PC-9 (cell line): ENCODE measurements at regions of chr5 and their contacts with region 1.

Region 1: GRCh38 chr5:40688127-40688761 is 8.5 kb downstream of the PTGER4 start:
- DNase-seq: peak; percentile 80 to 93
- H3K4me3 ChIP-seq: no peak overlapping the region
- H3K27ac ChIP-seq: 0 out of 2 replicates have a peak overlapping the region, but pooled peaks have one; percentile 2
- H3K4me1 ChIP-seq: peaks cover 52% of the 10 kb centered on the region
- H3K27me3 ChIP-seq: no peaks in the 10 kb centered on the region
- CTCF ChIP-seq: peak; percentile 98

Region 2: DNA sequence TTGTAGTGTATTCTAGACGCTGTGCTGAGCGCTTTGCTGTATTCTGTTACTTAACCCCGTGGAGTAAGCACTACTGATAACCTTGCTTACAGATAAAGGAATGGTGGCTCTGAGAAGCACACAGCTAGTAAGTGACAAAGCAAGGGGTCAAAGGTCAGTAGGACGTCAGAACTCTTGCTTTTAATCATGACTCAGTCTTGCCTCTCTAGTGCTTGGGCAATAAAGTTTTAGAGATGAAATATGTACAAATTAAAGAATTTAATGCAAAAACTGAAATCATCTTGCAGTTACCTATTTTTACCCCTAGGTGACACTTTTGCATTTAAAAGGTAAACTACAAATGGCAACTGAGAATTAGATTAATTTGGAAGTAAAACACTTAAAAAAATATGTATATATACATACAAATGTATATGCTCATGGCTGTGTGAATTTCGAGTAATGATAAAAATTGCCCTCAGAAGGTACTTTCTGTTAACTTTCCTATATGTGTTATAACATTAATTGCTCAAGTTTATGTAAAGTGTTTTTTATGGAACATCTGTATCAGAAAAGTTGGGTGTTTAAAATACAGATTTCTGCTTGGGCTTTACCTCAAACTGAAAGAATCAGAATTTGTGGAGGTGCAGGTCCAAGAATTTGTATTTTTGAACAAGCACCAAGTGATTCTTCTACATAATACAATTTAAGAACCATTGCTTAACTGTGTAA is 1088.4 kb before region 1 on chr5:
- CTCF ChIA-PET with region 1: no interaction called
- POLR2A ChIA-PET with region 1: interaction called, 3 read pairs
- intact Hi-C with region 1: loop called (anchors 1 kb)
- DNase-seq: peak in 1 of 2 experiments; percentile 63
- H3K4me3 ChIP-seq: no peak overlapping the region
- H3K27ac ChIP-seq: no peak overlapping the region
- H3K4me1 ChIP-seq: peaks cover 12% of the 10 kb centered on the region
- H3K27me3 ChIP-seq: no peaks in the 10 kb centered on the region
- CTCF ChIP-seq: peak; percentile 85

Region 3: DNA sequence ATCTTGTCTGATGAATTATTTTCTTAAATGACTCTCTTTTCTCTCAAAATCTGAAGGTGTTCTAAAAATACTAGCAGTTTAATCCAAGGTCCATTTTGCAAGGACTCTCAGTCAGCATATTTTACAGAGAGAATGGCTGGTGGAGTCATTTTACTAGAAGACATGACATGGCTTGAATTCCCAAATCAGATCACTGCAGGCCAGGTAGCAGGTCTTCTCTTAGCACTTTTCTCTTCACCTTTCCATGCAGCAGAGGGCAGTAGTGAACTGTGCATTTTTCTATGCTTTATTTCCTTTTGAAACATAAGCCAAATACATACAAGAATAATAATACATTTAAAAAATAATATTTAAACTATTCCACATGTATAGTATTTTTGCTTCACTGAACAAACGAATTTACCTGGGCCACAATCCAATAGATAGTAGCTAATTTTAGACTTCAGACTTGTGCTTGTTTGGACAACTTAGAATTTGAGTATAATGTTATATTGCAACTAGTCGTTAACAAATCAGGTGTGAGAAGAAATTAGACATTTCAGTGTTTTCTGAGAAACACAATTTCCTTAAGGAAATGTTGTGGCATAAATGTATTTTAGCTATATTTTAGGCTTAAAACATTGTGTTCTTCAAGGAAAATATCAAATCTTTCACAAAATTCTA is 974.1 kb before region 1 on chr5:
- CTCF ChIA-PET with region 1: interaction called, 21 read pairs
- POLR2A ChIA-PET with region 1: no interaction called
- intact Hi-C with region 1: loop called (anchors 1 kb)
- DNase-seq: peak; percentile 63 to 74
- H3K4me3 ChIP-seq: no peak overlapping the region
- H3K27ac ChIP-seq: peak overlapping the region; percentile 60
- H3K4me1 ChIP-seq: peaks cover 8% of the 10 kb centered on the region; the same call in 1 of the 2 replicates
- H3K27me3 ChIP-seq: no peaks in the 10 kb centered on the region
- CTCF ChIP-seq: peak; percentile 87

Region 4: GRCh38 chr5:40112875-40113274 is 575.4 kb before region 1 on chr5:
- CTCF ChIA-PET with region 1: no interaction called
- POLR2A ChIA-PET with region 1: interaction called, 4 read pairs
- intact Hi-C with region 1: loop called (anchors 2 kb)
- DNase-seq: no peak
- H3K4me3 ChIP-seq: no peak overlapping the region
- H3K27ac ChIP-seq: no peak overlapping the region
- H3K4me1 ChIP-seq: peaks cover 12% of the 10 kb centered on the region
- H3K27me3 ChIP-seq: no peaks in the 10 kb centered on the region
- CTCF ChIP-seq: no peak

Region 5: DNA sequence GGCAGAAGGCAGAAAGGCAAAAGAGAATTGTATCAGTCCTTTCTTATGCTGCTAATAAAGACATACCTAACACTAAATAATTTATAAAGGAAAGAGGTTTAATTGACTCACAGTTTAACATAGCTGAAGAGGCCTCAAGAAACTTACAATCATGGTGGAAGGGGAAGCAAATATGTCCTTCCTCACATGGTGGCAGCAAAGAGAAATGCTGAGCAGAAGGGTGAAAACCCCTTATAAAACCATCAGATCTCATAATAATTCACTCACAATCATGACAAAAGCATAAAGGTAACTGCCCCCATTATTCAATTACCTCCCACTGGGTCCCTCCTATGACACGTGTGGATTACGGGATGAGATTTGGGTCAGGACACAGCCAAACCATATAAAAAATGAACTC is 321.0 kb before region 1 on chr5:
- CTCF ChIA-PET with region 1: no interaction called
- POLR2A ChIA-PET with region 1: no interaction called
- intact Hi-C with region 1: loop called (anchors 5 kb)
- DNase-seq: no peak
- H3K4me3 ChIP-seq: no peak overlapping the region
- H3K27ac ChIP-seq: no peak overlapping the region
- H3K4me1 ChIP-seq: no peaks in the 10 kb centered on the region
- H3K27me3 ChIP-seq: no peaks in the 10 kb centered on the region
- CTCF ChIP-seq: no peak

Region 6: DNA sequence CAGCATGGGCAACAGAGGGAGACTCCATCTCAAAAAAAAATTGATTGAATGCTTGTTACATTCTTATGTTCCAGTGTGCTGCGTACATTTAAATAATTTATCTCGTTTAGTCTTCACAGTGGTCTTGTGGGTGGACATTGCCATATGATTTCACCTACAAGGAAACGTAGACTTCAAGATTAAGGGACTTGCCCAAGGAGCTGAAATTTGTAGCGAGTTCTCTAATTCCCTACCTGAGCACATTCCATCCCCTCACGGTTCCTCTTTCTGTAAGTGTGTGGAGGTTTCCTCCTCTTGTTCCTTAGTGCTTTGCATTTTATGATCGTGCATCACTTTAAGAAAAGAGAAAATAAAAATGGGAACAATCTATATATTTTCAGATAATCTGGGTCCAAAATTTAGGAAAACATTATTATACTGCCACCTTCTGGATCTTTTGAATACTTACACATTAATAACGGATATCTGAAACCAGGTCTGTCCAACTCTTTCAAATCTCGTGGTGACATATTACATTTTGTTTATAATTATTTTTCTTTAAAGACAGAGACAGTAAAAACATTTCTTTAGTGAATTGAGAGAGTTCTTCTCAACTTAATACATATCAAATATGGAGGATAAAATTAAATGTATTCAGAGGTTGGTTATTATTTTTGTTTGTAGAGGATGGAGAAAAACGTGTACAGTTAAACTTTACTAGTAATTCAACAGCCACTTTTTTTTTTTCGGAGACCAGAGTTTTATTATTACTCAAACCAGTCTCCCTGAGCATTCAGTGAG is 191.1 kb after region 1 on chr5:
- CTCF ChIA-PET with region 1: interaction called, 5 read pairs
- POLR2A ChIA-PET with region 1: no interaction called
- intact Hi-C with region 1: loop called (anchors 1 kb)
- DNase-seq: peak; percentile 6 to 47
- H3K4me3 ChIP-seq: no peak overlapping the region
- H3K27ac ChIP-seq: no peak overlapping the region
- H3K4me1 ChIP-seq: no peaks in the 10 kb centered on the region
- H3K27me3 ChIP-seq: no peaks in the 10 kb centered on the region
- CTCF ChIP-seq: peak; percentile 90

Region 7: DNA sequence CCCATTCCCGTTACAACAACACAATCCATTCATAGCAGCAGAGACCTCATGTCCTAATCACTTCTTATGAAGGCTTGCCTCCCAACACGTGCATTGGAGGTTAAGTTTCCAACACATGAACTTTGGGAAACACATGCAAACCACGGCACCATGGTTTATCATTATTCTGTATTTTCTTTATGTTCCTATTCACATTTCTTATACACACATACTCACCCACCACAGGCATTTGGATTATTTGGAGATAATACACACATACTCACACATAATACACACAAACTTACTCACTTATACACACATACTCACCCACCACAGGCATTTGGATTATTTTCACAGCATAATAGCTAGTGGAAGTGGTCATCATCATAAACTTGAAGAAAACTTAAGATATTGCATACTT is 296.6 kb after region 1 on chr5:
- CTCF ChIA-PET with region 1: no interaction called
- POLR2A ChIA-PET with region 1: no interaction called
- intact Hi-C with region 1: no loop called
- DNase-seq: peak in 1 of 2 experiments; percentile 34
- H3K4me3 ChIP-seq: no peak overlapping the region
- H3K27ac ChIP-seq: no peak overlapping the region
- H3K4me1 ChIP-seq: peaks cover 12% of the 10 kb centered on the region
- H3K27me3 ChIP-seq: no peaks in the 10 kb centered on the region
- CTCF ChIP-seq: no peak